ENCODE measurements at regions of chr10 and their contacts with region 1.

Region 1: DNA sequence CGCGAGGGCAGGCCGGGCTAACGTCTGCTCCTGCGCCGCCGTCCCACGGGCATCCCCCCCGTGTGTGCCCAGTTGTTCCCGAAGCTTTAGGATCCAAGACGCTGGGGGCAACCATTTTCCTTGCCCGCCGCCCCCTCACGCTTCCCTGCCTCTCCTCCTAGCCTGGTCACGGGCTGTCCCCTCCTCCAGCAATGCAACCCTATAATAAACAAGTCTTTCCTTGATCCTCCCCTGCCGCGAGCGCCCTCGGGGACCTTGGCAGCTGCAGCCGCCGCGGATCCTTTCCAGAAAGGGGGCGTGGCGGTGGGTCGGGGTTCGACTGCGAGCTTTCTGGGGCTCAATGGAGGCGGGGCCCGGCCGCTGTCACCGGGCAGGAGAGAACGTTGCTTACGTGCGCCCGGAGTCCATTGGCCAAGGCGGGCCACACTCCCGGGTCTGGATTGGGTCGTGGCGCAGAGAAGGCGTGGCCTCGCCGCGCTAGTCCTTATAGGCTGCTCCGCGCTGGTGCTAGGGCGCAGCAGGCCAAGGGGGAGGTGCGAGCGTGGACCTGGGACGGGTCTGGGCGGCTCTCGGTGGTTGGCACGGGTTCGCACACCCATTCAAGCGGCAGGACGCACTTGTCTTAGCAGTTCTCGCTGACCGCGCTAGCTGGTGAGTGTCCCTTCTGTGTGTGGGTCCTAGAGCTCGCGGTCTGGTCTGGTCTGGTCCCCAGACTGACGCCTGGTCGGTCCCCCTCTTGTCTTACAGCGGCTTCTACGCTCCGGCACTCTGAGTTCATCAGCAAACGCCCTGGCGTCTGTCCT is at the start of gene DDIT4:
- DNase-seq: peak; percentile 96
- ATAC-seq: peak; percentile 91
- H3K4me3 ChIP-seq: peak within 1 kb of the TSS; percentile 93 to 94
- H3K27ac ChIP-seq: peak within 1 kb of the TSS; percentile 91
- H3K4me1 ChIP-seq: peaks cover 39 to 69% of the 10 kb centered on the region in 2 experiments
- H3K27me3 ChIP-seq: no peaks in the 10 kb centered on the region
- CTCF ChIP-seq: no peak
- POLR2A ChIP-seq: peak; percentile 99
- RAD21 ChIP-seq: no peak
- total RNA-seq, gene DDIT4: 462 TPM

Region 2: GRCh38 chr10:72215652-72216549 is 57.7 kb before region 1 on chr10 and contains the starts of genes ANAPC16 and ASCC1:
- CTCF ChIA-PET with region 1: interaction called, 3 read pairs
- POLR2A ChIA-PET with region 1: interaction called, 10 read pairs
- RAD21 ChIA-PET with region 1: no interaction called
- intact Hi-C with region 1: no loop called
- DNase-seq: peak; percentile 84
- ATAC-seq: peak; percentile 95
- H3K4me3 ChIP-seq: peak within 1 kb of the TSS; percentile 72 to 85
- H3K27ac ChIP-seq: peak within 1 kb of the TSS; percentile 99
- H3K4me1 ChIP-seq: peaks cover 18 to 23% of the 10 kb centered on the region in 2 experiments
- H3K27me3 ChIP-seq: no peaks in the 10 kb centered on the region
- CTCF ChIP-seq: no peak
- POLR2A ChIP-seq: peak; percentile 94
- RAD21 ChIP-seq: peak; percentile 11; the same call in 1 of the 2 replicates
- total RNA-seq, gene ANAPC16: 71.1 TPM
- total RNA-seq, gene ASCC1: 34.5 TPM

Region 3: DNA sequence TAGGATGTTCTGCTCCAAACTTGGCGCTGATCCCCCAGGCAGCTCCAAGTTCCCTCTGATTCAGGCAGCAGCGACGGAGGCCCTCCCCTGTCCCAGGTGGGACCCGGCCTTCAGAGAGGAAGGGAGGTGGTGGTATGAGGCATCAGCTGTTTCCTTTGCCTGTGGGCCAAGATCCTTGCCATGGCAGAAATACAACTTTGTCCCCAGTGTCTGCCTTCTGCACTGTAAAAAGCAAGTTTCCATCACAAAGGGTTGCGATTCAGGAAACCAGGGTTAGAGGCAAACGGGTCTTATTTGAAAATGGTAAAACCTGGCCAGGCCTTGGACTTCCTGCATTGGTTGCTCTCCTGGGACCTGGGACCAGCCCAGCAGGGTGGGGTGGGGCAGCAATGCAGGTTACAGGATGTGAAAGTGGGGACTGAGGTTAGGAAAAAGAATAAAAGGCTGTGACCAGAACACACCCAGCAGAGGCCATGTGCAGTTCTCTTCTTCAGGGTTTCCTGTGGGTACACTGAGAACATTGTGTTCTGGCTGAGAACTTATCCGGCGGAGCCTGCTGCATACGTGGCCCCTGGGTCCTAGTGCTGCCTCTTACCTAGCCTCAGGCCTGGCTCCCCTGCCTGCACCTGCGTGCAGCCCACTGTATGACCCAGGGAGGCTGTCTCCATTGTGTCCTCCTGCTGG is 25.0 kb before region 1 on chr10:
- CTCF ChIA-PET with region 1: no interaction called
- POLR2A ChIA-PET with region 1: interaction called, 22 read pairs
- RAD21 ChIA-PET with region 1: no interaction called
- intact Hi-C with region 1: no loop called
- DNase-seq: no peak
- ATAC-seq: peak; percentile 78
- H3K4me3 ChIP-seq: peak overlapping the region; percentile 21 to 24; a peak in 3 of 4 replicates
- H3K27ac ChIP-seq: peak overlapping the region; percentile 50; the same call in 1 of the 2 replicates
- H3K4me1 ChIP-seq: peaks cover 32 to 40% of the 10 kb centered on the region in 2 experiments
- H3K27me3 ChIP-seq: no peaks in the 10 kb centered on the region
- CTCF ChIP-seq: no peak
- POLR2A ChIP-seq: peak; percentile 35
- RAD21 ChIP-seq: no peak

Region 4: DNA sequence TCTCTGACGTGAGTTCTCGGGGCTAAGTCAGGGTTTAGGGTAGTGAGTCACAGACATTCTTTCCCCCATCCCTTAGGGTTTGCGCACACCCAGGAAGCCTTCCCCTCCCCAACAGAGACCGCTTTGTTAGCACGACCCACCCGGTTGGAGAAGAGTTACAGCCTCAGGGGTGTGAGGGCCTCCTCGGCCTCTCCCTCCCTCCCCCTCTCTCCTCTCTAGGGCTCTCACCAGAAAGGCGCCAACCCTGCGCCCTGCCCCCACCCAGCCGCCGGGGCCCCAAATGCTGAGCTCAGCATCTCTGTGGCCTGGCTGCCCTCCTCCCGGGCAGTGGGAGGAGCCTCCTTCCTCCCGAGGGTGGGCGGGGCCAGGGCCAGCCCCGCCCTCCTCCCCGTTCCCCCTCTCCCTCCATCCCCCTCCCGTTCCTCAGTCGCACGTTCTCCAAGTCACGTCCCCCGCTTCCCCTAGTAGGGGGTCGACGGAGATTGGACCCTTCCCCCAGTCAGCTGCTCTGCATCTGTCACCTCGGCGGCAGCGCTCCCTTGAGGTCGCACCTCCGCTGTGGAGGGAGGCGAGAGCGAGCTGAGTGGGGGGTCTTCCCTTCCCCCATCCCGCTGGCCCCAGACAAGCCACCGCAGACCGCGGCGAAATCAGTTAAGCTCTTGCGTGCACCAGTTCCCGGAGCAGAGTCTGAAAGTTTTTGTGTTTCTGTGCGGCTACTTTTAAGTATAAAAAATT is 12.9 kb before region 1 on chr10:
- CTCF ChIA-PET with region 1: interaction called, 10 read pairs
- POLR2A ChIA-PET with region 1: interaction called, 166 read pairs
- RAD21 ChIA-PET with region 1: no interaction called
- intact Hi-C with region 1: no loop called
- DNase-seq: no peak
- ATAC-seq: peak; percentile 83
- H3K4me3 ChIP-seq: peak overlapping the region; percentile 46 to 64
- H3K27ac ChIP-seq: peak overlapping the region; percentile 86
- H3K4me1 ChIP-seq: peaks cover 44 to 72% of the 10 kb centered on the region in 2 experiments
- H3K27me3 ChIP-seq: no peaks in the 10 kb centered on the region
- CTCF ChIP-seq: no peak
- POLR2A ChIP-seq: no peak
- RAD21 ChIP-seq: no peak

Region 5: DNA sequence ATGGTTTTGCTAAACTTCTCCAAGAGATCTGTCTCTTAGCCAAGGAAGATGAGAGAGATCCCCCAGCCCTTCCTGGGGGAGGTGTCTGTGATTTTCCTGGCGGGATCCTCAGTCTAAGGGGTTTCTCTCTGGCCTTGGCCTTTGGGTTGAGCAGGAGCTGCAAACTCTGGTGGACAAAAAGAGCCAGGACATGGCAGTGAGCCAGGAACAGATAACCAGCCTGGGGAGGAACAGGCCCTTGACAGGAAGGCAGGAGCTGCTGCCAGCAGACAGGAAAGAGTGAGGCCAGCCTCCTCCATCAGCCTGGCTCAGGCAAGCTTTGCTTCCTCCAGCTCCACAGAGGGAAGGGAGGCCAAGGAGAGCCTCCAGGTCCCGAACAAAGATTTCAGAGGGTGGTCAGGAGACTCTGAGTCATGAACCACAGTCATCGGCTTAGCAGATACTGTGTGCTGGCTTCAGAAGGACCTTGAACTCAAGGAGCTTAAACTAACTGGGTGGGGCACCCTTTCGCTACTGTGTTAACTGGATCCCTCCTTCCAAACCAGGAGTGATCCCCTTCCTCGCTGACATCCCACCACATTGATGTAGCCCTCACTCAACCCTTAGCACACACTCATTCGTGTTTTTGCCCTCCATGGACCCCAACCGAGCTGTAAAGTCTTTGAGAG is 34.8 kb after region 1 on chr10:
- CTCF ChIA-PET with region 1: interaction called, 3 read pairs
- POLR2A ChIA-PET with region 1: interaction called, 36 read pairs
- RAD21 ChIA-PET with region 1: no interaction called
- intact Hi-C with region 1: no loop called
- DNase-seq: peak; percentile 82
- ATAC-seq: peak; percentile 74
- H3K4me3 ChIP-seq: peak overlapping the region in 1 of 2 experiments; percentile 5; a peak in 1 of 4 replicates
- H3K27ac ChIP-seq: peak overlapping the region; percentile 54
- H3K4me1 ChIP-seq: peaks cover 30 to 53% of the 10 kb centered on the region in 2 experiments
- H3K27me3 ChIP-seq: no peaks in the 10 kb centered on the region
- CTCF ChIP-seq: no peak
- POLR2A ChIP-seq: no peak
- RAD21 ChIP-seq: no peak

Region 6: DNA sequence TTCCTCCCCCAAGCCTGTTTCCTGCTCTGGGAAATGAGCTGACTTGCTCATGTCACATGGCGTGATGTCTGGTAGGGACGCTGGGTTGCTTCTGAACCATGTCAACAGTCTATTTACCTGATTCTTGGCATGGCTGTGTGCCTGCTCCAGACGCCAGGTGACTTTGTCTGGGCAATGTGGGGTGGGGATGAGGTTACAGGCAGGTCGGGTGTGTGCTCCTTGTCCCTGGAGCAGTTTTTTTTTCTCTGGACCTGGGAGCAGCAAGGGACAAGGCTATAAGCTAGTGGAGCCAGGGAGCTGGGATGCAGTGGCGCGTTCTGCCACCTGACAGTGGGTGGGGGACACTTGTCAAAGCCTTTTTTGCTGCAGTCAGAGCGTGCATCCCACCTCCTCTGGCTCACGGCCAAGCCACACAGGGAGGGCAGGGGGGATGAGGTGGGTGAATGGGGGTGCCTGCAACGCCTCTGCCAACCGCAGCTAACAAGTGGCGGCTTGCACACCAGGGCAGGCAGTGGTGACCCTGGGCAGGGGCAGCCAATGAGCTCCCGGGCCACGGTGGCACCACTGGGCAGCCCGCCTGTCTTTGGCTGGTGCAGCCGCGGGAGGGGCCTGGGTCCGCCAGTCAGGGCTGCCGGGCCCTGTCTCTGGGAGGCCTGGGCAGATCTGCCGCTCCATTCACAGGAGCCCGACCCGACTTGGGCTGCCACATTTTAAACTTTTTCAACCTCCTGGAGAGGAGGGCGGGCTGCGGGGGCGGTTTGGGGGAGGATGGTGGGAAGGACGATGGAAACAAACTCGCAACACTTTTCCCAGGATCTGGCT is 58.2 kb after region 1 on chr10:
- CTCF ChIA-PET with region 1: interaction called, 17 read pairs
- POLR2A ChIA-PET with region 1: interaction called, 274 read pairs
- RAD21 ChIA-PET with region 1: interaction called, 3 read pairs
- intact Hi-C with region 1: loop called (anchors 2 kb)
- DNase-seq: peak; percentile 80
- ATAC-seq: peak; percentile 92
- H3K4me3 ChIP-seq: peak overlapping the region; percentile 22 to 28
- H3K27ac ChIP-seq: peak overlapping the region; percentile 92
- H3K4me1 ChIP-seq: peaks cover 50 to 63% of the 10 kb centered on the region in 2 experiments
- H3K27me3 ChIP-seq: no peaks in the 10 kb centered on the region
- CTCF ChIP-seq: peak in 2 of 3 experiments; percentile 38 to 50; a peak in 3 of 6 replicates
- POLR2A ChIP-seq: peak; percentile 36
- RAD21 ChIP-seq: no peak

Measured in HCT116 (cell line).